Activated CD4-positive, alpha-beta T cell treated with anti-CD3 and anti-CD28 coated beads for 36 hours (primary cell): ENCODE measurements at regions of chr1 and their contacts with region 1.

Region 1: DNA sequence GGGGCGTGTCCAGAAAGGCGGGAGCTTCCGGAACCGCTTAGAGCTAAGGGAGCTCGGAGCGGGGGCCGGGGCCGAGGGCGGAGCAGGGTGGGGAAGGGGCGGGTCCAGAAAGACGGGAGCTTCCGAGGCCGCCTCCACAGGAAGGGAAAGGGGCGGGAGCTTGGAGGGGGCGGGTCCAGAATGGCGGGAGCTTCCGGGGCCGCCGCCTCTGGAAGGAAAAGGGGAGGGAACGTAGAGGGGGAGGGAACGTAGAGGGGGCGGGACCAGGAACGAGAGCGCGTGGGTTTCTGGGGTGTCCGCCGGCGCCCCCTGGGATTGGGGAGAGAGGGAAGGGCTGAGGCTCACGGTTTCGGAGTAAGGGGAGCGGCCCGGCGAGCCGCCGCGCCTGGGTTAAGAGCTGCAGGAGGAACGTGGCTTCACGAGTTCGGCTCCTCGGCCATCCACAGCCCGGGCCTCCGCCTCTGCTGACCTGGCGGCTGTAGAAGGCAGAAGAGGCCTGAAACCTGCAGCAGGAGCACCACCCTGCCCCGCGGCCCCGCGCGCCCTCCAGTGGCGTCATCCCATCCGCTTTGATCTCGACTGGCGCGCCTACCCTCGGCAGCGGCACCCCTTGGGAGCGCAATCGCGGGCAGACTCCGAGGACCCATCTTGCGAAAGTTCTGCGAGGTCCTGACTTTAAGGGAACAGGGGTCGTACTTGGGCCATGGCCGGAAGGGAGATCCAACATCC is 22.9 kb upstream of the HPDL start:
- DNase-seq: peak; percentile 100
- ATAC-seq: peak; percentile 83
- H3K4me3 Mint-ChIP-seq: peak overlapping the region; percentile 84
- H3K27ac Mint-ChIP-seq: peak overlapping the region; percentile 95
- H3K4me1 Mint-ChIP-seq: peaks cover 44% of the 10 kb centered on the region
- H3K27me3 Mint-ChIP-seq: no peaks in the 10 kb centered on the region

Region 2: DNA sequence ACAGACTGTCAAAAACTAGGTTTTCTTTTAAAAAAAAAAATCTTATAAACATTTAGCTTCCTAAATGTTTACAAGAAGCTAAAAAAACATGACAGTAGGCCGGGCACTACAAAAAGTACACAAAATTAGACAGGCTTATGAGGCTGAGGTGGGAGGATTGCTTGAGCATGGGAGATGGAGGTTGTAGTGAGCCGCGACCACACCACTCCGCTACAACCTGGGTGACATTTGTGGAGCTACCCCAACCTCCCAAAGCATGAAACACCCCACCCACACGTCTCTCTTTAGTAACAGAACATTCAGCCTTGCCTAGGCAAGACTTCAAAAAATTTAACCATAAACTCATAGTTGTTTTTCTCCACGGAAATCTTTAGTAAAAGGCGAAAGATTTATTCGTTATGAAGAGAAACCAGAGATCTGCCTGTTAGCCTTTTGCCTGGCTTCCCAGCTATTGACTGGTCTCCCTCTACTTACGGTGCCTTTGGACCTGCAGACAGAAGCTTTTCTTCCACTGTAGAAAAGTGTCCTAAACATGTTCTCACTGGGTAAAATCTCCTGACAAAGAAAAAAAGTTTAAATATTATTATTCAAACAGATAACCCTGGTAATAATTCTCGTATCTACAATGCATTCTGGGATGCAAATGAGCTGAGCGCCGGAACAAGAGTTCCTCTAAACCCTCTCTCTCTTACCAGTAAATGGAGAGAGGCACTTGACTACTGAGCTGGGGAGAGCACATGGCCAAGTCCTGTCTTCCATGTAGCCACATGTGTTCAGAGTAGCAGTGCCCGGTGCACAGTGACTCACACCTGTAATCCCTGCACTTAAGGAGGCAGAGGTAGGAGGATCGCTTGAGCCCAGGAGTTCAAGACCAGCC is 582.0 kb before region 1 on chr1:
- CTCF ChIA-PET with region 1: no interaction called
- POLR2A ChIA-PET with region 1: interaction called, 15 read pairs
- intact Hi-C with region 1: loop called in 1 of 2 experiments (anchors 5 kb)
- DNase-seq: peak; percentile 89
- ATAC-seq: peak; percentile 85
- H3K4me3 Mint-ChIP-seq: peak overlapping the region; percentile 66
- H3K27ac Mint-ChIP-seq: peak overlapping the region; percentile 96
- H3K4me1 Mint-ChIP-seq: peaks cover 80% of the 10 kb centered on the region
- H3K27me3 Mint-ChIP-seq: no peaks in the 10 kb centered on the region

Region 3: GRCh38 chr1:44807262-44808062 is 496.3 kb before region 1 on chr1 and contains the start of gene DYNLT4:
- CTCF ChIA-PET with region 1: interaction called, 5 read pairs
- POLR2A ChIA-PET with region 1: interaction called, 3 read pairs
- intact Hi-C with region 1: loop called (anchors 1 to 10 kb)
- DNase-seq: peak; percentile 94
- ATAC-seq: peak; percentile 57
- H3K4me3 Mint-ChIP-seq: peak within 1 kb of the TSS; percentile 87
- H3K27ac Mint-ChIP-seq: peak within 1 kb of the TSS; percentile 99
- H3K4me1 Mint-ChIP-seq: peaks cover 92% of the 10 kb centered on the region
- H3K27me3 Mint-ChIP-seq: no peaks in the 10 kb centered on the region
- total RNA-seq, gene DYNLT4: 0.32 TPM in 1 of 2 experiments, not detected in the other

Region 4: DNA sequence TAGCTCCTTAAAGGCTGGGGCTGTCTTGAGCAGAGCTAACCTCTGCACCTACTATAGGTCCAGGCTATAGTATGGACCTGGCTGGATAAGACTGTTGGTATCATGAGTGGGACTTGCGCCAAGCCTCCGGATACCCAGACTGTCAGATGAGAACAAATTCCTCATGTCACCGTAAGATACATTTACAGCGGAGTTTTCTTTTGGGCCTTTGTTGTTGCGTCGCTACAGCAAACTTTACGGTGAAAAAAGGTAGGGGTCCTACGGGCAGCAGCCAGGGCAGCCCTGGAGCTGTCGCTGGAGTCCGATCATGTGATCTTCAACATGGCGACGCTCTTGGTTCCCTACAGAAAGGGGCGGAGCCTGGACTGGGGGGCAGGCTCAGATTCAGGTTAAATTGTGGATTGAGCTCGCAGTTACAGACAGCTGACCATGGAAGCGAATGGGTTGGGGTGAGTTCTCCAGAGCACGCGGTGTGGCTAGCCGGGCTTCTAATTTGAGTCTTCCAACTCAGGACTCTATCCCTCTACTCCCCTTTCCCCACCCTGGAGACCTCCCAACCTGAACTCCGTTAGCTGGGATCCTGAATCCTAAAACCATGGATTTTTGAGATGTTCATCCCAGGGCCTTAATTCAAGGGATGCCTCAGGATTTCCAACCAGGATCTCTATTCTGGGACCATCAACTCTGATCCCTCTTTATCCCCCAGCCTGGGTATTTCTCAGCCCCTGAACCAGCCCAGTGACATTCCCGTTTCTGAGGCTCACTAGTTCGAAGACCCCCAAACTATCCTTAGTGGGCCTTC is 291.7 kb before region 1 on chr1 and contains the start of gene UROD:
- CTCF ChIA-PET with region 1: interaction called, 255 read pairs
- POLR2A ChIA-PET with region 1: interaction called, 33 read pairs
- intact Hi-C with region 1: loop called (anchors 1 kb)
- DNase-seq: peak; percentile 96
- ATAC-seq: peak; percentile 80
- H3K4me3 Mint-ChIP-seq: peak within 1 kb of the TSS; percentile 74
- H3K27ac Mint-ChIP-seq: peak within 1 kb of the TSS; percentile 97
- H3K4me1 Mint-ChIP-seq: peaks cover 36% of the 10 kb centered on the region
- H3K27me3 Mint-ChIP-seq: no peaks in the 10 kb centered on the region
- total RNA-seq, gene UROD: 123 to 134 TPM

Region 5: GRCh38 chr1:45196873-45197272 is 106.9 kb before region 1 on chr1:
- CTCF ChIA-PET with region 1: no interaction called
- POLR2A ChIA-PET with region 1: no interaction called
- intact Hi-C with region 1: no loop called
- DNase-seq: no peak
- ATAC-seq: no peak
- H3K4me3 Mint-ChIP-seq: no peak overlapping the region
- H3K27ac Mint-ChIP-seq: no peak overlapping the region
- H3K4me1 Mint-ChIP-seq: no peaks in the 10 kb centered on the region
- H3K27me3 Mint-ChIP-seq: no peaks in the 10 kb centered on the region

Region 6: GRCh38 chr1:45291716-45292115 is 12.0 kb before region 1 on chr1:
- CTCF ChIA-PET with region 1: interaction called, 16 read pairs
- POLR2A ChIA-PET with region 1: no interaction called
- intact Hi-C with region 1: no loop called
- DNase-seq: no peak
- ATAC-seq: no peak
- H3K4me3 Mint-ChIP-seq: no peak overlapping the region
- H3K27ac Mint-ChIP-seq: no peak overlapping the region
- H3K4me1 Mint-ChIP-seq: no peaks in the 10 kb centered on the region
- H3K27me3 Mint-ChIP-seq: no peaks in the 10 kb centered on the region

Region 7: GRCh38 chr1:45444609-45445171 is 140.9 kb after region 1 on chr1:
- CTCF ChIA-PET with region 1: no interaction called
- POLR2A ChIA-PET with region 1: no interaction called
- intact Hi-C with region 1: no loop called
- DNase-seq: no peak
- ATAC-seq: no peak
- H3K4me3 Mint-ChIP-seq: no peak overlapping the region
- H3K27ac Mint-ChIP-seq: no peak overlapping the region
- H3K4me1 Mint-ChIP-seq: no peaks in the 10 kb centered on the region
- H3K27me3 Mint-ChIP-seq: no peaks in the 10 kb centered on the region

Region 8: DNA sequence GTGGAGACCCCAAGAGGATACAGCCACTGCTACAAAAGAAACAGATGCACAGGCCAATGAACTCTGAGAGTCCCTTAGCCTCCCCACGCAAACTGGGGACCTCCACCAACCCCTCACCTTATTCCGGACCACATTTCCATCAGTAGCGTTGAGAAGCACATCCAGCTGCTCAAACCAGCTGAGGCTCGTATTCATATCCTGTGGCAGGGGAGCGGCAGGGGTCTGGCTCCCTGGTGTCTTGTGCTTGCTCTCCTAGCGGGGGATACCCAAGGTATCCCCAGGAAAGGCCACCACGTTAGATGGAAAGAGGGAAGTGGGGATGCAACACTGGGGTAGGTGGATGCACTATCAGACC is 195.6 kb after region 1 on chr1:
- CTCF ChIA-PET with region 1: interaction called, 4 read pairs
- POLR2A ChIA-PET with region 1: interaction called, 7 read pairs
- intact Hi-C with region 1: loop called in 1 of 2 experiments (anchors 1 kb)
- DNase-seq: peak; percentile 45
- ATAC-seq: no peak
- H3K4me3 Mint-ChIP-seq: peak overlapping the region; percentile 81
- H3K27ac Mint-ChIP-seq: peak overlapping the region; percentile 92
- H3K4me1 Mint-ChIP-seq: peaks cover 23% of the 10 kb centered on the region
- H3K27me3 Mint-ChIP-seq: no peaks in the 10 kb centered on the region